HepG2 (cell line): ENCODE measurements at regions of chr15 and their contacts with region 1.

Region 1: GRCh38 chr15:84929744-84930371 is 45.4 kb downstream of the SLC28A1 start:
- DNase-seq: peak; percentile 90
- ATAC-seq: peak; percentile 88
- H3K4me3 ChIP-seq: no peak overlapping the region
- H3K27ac ChIP-seq: peak overlapping the region; percentile 29
- H3K4me1 ChIP-seq: peaks cover 34% of the 10 kb centered on the region
- H3K27me3 ChIP-seq: no peaks in the 10 kb centered on the region
- CTCF ChIP-seq: no peak
- EP300 ChIP-seq: peak in 1 of 2 experiments; percentile 66; a peak in 2 of 4 replicates
- POLR2A ChIP-seq: no peak
- RAD21 ChIP-seq: no peak

Region 2: DNA sequence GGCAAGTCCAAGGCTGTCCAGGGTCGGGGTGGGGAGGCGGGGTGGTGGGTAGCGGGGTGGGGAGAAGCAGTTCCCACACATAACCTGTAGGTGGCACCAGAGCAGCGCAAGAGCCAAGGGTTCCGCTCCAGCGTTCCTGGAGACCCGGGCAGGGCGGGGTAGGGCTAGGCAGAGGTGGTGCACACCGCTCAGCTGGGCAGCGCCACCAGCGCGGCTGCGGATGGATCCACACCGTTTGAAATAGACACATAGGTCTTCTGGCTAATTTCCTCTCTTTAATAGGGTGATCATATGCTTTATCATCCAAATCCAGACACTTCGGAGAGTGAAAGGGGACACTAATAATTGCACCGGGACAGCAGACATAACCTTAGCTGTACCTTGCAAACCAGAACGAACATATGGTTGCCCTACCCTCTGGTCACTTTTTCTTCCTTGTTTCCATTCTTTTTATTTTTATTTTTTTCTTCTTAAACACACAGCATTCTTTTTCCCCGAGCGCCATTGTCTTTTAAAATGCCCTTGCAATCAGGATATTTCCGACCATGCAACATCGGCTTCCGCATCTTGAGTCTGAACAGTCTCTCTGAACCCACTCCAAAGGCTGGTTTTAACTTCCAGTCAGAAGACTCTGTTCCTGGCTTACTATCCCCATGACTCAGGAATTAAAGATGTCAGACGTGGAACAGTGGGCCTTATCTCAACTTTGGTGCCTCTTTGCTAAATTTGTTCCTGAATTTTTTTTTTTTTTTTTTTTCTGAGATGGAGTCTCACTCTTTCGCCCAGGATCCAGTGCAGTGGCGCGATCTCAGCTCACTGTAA is 341.6 kb before region 1 on chr15:
- CTCF ChIA-PET with region 1: no interaction called
- POLR2A ChIA-PET with region 1: no interaction called
- in situ Hi-C with region 1: loop called (anchors 10 kb)
- intact Hi-C with region 1: loop called (anchors 5 kb)
- DNase-seq: peak; percentile 83
- ATAC-seq: peak; percentile 100
- H3K4me3 ChIP-seq: peak overlapping the region; percentile 41 to 62 (median 50)
- H3K27ac ChIP-seq: no peak overlapping the region
- H3K4me1 ChIP-seq: peaks cover 27% of the 10 kb centered on the region
- H3K27me3 ChIP-seq: no peaks in the 10 kb centered on the region; a peak in 2 of 5 replicates
- CTCF ChIP-seq: peak; percentile 89
- EP300 ChIP-seq: no peak
- POLR2A ChIP-seq: no peak
- RAD21 ChIP-seq: peak; percentile 93

Region 3: GRCh38 chr15:84600851-84601838 is 328.7 kb before region 1 on chr15 and contains the start of gene ZSCAN2:
- CTCF ChIA-PET with region 1: no interaction called
- POLR2A ChIA-PET with region 1: no interaction called
- in situ Hi-C with region 1: loop called (anchors 10 kb)
- intact Hi-C with region 1: no loop called
- DNase-seq: peak; percentile 91
- ATAC-seq: peak; percentile 96
- H3K4me3 ChIP-seq: peak within 1 kb of the TSS; percentile 78 to 98 (median 86)
- H3K27ac ChIP-seq: peak within 1 kb of the TSS; percentile 86
- H3K4me1 ChIP-seq: peaks cover 60% of the 10 kb centered on the region
- H3K27me3 ChIP-seq: no peaks in the 10 kb centered on the region; a peak in 1 of 5 replicates
- CTCF ChIP-seq: peak; percentile 22; the same call in 1 of the 2 replicates
- EP300 ChIP-seq: no peak
- POLR2A ChIP-seq: peak; percentile 70 to 79
- RAD21 ChIP-seq: peak; percentile 48
- total RNA-seq, gene ZSCAN2: 21.5 and 23.7 TPM in 2 replicates

Region 4: GRCh38 chr15:84671211-84671610 is 258.6 kb before region 1 on chr15:
- CTCF ChIA-PET with region 1: no interaction called
- POLR2A ChIA-PET with region 1: no interaction called
- in situ Hi-C with region 1: no loop called
- intact Hi-C with region 1: no loop called
- DNase-seq: no peak
- ATAC-seq: no peak
- H3K4me3 ChIP-seq: no peak overlapping the region
- H3K27ac ChIP-seq: no peak overlapping the region
- H3K4me1 ChIP-seq: peaks cover 8% of the 10 kb centered on the region; the same call in 1 of the 2 replicates
- H3K27me3 ChIP-seq: no peaks in the 10 kb centered on the region
- CTCF ChIP-seq: no peak
- EP300 ChIP-seq: no peak
- POLR2A ChIP-seq: no peak
- RAD21 ChIP-seq: no peak

Region 5: DNA sequence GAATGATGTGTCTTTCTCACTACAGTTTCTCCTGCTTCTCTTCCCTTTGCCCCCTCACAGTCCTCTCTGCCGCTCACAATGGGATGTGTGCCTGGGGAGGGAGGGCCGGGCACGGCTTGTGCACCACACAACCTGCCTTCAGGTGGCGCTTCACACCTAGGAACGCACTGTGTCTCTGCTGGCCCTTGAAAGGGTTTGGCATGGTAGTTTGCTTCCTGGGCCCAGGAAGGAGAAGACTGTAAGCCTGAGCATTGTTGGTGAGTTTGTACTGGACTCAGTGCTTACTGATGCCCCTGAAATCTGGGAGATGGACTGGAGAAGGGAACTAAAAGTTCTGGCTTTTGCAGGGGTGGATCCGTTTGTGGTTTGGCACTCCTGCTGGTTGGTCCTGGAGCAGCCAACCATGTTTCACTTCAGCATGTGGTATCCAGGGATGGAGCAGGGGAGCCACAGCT is 103.5 kb before region 1 on chr15:
- CTCF ChIA-PET with region 1: interaction called, 14 read pairs
- POLR2A ChIA-PET with region 1: interaction called, 3 read pairs
- in situ Hi-C with region 1: loop called (anchors 5 kb)
- intact Hi-C with region 1: loop called (anchors 1 kb)
- DNase-seq: peak; percentile 48
- ATAC-seq: peak; percentile 89
- H3K4me3 ChIP-seq: 0 out of 6 replicates have a peak overlapping the region, but pooled peaks of 1 of the 3 experiments have one; percentile 36
- H3K27ac ChIP-seq: no peak overlapping the region
- H3K4me1 ChIP-seq: peaks cover 42% of the 10 kb centered on the region
- H3K27me3 ChIP-seq: no peaks in the 10 kb centered on the region; a peak in 2 of 5 replicates
- CTCF ChIP-seq: peak; percentile 97
- EP300 ChIP-seq: no peak
- POLR2A ChIP-seq: no peak
- RAD21 ChIP-seq: peak; percentile 60

Region 6: GRCh38 chr15:84844964-84845363 is 84.9 kb before region 1 on chr15:
- CTCF ChIA-PET with region 1: interaction called, 30 read pairs
- POLR2A ChIA-PET with region 1: no interaction called
- in situ Hi-C with region 1: no loop called
- intact Hi-C with region 1: loop called (anchors 1 kb)
- DNase-seq: peak; percentile 38
- ATAC-seq: peak; percentile 54
- H3K4me3 ChIP-seq: no peak overlapping the region; a peak in 1 of 6 replicates
- H3K27ac ChIP-seq: peak overlapping the region; percentile 46
- H3K4me1 ChIP-seq: peaks cover 50% of the 10 kb centered on the region
- H3K27me3 ChIP-seq: peaks cover 0 to 4% of the 10 kb centered on the region in 2 experiments; a peak in 2 of 5 replicates
- CTCF ChIP-seq: no peak
- EP300 ChIP-seq: peak in 1 of 2 experiments; percentile 63; a peak in 1 of 4 replicates
- POLR2A ChIP-seq: no peak
- RAD21 ChIP-seq: no peak

Region 7: DNA sequence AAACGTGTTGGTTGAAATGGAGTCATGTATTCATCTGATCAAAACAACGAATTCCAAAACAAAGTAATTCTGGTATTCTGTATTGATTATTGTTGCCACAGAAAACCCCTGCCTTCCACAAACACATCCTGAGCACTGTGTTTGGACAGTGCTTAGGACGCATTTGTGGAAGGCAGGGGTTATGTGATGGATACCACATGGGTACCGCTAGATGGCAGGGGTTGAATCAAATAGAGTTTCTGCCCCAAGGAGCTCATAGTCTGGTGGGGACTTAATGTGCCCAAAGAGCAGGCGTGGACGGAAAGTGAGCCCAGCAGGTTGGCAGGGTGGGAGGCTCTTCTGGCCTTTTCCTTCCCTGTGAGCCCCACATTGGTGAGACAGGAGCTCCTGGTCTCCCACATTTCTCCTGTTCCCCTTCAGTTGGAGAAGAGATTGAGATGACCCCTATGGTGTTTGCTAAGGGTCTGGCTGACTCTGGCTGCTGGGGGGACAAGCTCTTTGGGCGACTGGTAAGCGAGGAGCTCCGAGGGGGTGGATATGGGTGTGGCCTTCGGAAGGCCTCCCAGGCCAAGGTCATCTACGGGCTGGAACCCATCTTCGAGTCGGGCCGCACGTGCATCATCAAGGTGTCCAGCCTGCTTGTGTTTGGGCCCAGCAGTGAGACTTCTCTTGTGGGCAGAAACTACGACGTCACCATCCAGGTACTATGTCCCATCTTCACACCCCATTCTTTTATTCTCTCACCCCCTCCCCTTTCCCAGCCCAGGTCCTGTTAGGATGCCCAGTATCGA is 67.4 kb before region 1 on chr15:
- CTCF ChIA-PET with region 1: no interaction called
- POLR2A ChIA-PET with region 1: no interaction called
- in situ Hi-C with region 1: no loop called
- intact Hi-C with region 1: loop called (anchors 1 kb)
- DNase-seq: peak; percentile 23
- ATAC-seq: peak; percentile 68
- H3K4me3 ChIP-seq: no peak overlapping the region
- H3K27ac ChIP-seq: no peak overlapping the region
- H3K4me1 ChIP-seq: peaks cover 35% of the 10 kb centered on the region
- H3K27me3 ChIP-seq: peaks cover 4 to 33% of the 10 kb centered on the region in 2 experiments; a peak in 4 of 5 replicates
- CTCF ChIP-seq: peak; percentile 65
- EP300 ChIP-seq: no peak
- POLR2A ChIP-seq: no peak
- RAD21 ChIP-seq: no peak

Region 8: GRCh38 chr15:84883916-84884768 is 45.7 kb before region 1 on chr15 and contains the start of gene SLC28A1:
- CTCF ChIA-PET with region 1: no interaction called
- POLR2A ChIA-PET with region 1: no interaction called
- in situ Hi-C with region 1: no loop called
- intact Hi-C with region 1: loop called (anchors 2 kb)
- DNase-seq: peak; percentile 70
- ATAC-seq: peak; percentile 68
- H3K4me3 ChIP-seq: peak within 1 kb of the TSS; percentile 14 to 63 (median 24)
- H3K27ac ChIP-seq: peak within 1 kb of the TSS; percentile 46
- H3K4me1 ChIP-seq: peaks cover 77% of the 10 kb centered on the region
- H3K27me3 ChIP-seq: peaks cover 0 to 7% of the 10 kb centered on the region in 2 experiments; a peak in 1 of 5 replicates
- CTCF ChIP-seq: peak; percentile 60
- EP300 ChIP-seq: peak in 1 of 2 experiments; percentile 56; a peak in 2 of 4 replicates
- POLR2A ChIP-seq: peak in 1 of 2 experiments; percentile 69; a peak in 2 of 4 replicates
- RAD21 ChIP-seq: no peak
- total RNA-seq, gene SLC28A1: 0.31 and 0.39 TPM in 2 replicates

Region 9: DNA sequence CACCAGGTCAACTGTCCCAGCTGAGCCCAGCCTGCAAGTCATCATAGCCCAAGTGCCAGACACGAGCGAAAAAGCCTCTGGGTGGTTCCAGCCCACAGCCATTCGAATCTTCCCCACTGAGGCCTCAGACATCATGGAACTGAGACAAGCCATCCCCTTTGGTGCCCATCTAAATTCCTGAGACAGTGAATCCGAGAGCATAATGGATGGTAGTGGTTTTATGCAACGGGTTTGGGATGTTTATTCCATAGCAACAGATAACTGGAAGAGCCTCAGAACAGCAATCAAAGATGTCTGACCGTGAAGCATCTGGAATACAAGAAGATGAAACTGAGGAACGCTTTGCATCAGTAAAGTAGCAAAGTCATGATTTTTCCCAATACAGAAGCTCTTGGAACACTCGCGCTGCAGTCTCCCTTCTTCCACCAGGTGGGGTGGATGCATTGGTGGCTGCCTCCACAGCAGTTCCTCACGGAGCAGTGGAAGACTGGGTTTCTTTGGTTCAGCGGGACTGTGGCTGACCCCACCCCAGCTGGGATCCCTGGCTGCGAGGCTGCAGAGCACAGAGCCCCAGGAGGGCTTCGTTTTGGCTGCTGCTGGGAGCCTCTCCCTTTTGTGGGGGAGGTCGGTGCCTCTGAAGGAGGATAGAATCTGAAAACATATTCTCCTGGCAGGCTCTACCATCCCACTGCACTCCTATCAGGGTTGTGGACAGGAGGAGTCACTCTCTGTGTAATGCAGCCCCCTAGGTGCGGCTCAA is 25.4 kb after region 1 on chr15:
- CTCF ChIA-PET with region 1: no interaction called
- POLR2A ChIA-PET with region 1: no interaction called
- in situ Hi-C with region 1: no loop called
- intact Hi-C with region 1: no loop called
- DNase-seq: peak; percentile 71
- ATAC-seq: peak; percentile 97
- H3K4me3 ChIP-seq: peak overlapping the region; percentile 38 to 66 (median 46)
- H3K27ac ChIP-seq: no peak overlapping the region
- H3K4me1 ChIP-seq: peaks cover 49% of the 10 kb centered on the region
- H3K27me3 ChIP-seq: peaks cover 0 to 5% of the 10 kb centered on the region in 2 experiments; a peak in 1 of 5 replicates
- CTCF ChIP-seq: peak; percentile 91
- EP300 ChIP-seq: no peak
- POLR2A ChIP-seq: no peak
- RAD21 ChIP-seq: peak; percentile 88